Psoas muscle (tissue), 8 donors: ENCODE measurements at regions of chr3 and their contacts with region 1.

Region 1: DNA sequence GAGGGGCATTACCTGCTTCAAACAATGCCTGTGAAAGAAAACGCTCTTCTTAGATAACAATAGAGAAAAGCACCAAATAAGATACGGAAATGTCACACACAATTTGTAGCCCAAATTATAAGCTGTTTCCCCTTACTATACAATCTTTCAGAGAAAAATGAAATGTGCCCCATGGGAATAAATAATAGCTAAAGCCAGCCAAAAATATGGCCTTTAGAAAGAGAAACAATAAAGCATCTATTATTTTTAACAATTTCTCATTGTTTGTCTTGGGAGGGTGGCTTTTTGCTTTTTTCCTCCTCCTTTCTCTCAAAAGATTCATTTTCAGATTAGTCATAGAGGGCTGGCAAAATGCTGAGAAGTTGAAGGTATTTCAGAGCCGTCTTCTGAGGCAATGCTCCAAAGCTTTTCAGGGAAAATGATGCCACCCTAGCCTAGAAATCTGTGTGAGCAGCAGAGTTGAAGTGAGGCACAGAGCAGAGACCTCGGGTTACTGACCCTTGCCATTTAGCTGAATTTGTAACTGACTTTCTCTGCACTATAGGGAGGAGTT is 86.2 kb upstream of the PRICKLE2 start:
- DNase-seq: no peak
- ATAC-seq: no peak
- H3K4me3 ChIP-seq: no peak overlapping the region
- H3K27ac ChIP-seq: no peak overlapping the region
- H3K4me1 ChIP-seq: no peaks in the 10 kb centered on the region
- H3K27me3 ChIP-seq: no peaks in the 10 kb centered on the region
- CTCF ChIP-seq: no peak

Region 2: GRCh38 chr3:63607716-63608115 is 703.8 kb before region 1 on chr3:
- intact Hi-C with region 1: loop called in 1 of 2 experiments (anchors 5 kb)
- DNase-seq: no peak
- ATAC-seq: no peak
- H3K4me3 ChIP-seq: no peak overlapping the region
- H3K27ac ChIP-seq: no peak overlapping the region
- H3K4me1 ChIP-seq: no peaks in the 10 kb centered on the region
- H3K27me3 ChIP-seq: no peaks in the 10 kb centered on the region
- CTCF ChIP-seq: no peak

Region 3: DNA sequence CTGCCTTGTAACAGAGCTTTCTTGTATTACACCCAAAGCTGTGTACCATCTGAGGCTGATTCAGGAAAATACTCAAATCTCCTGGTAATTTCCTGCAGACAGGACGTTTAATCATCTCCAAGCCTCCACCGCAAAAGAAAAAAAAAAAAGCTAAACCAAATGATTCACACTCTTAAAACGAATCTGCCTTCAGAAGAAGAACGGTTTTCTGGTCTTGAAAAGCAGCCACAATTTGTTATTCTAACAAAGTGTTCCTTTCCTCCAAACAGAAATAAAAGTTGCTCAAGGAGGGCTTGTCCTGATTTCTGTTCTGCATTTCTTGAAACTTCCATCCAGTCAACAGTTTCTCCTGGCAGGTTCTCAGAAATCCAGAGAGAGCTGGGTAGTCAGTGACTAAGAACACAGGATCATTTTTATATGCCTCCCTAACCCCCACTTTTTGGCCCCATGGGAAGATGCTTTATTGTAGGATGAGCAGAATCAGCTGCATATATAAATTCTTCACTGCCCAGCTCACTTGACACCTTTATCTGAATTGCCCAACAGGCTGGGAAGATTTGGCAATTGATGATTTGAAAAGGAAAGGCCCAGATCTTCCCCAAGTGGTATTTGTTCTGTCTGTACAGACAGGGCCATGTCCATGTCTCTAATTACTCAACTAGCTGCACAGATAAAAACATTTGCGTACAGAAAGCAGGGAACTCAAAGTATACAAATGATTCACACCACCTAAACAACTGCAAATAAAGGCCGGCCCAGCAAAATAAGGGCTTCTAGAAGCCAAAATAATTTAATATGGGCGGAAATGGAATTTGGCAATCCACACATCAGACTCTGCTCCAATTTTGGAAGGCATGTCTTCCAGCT is 45.2 kb before region 1 on chr3:
- intact Hi-C with region 1: no loop called
- DNase-seq: no peak
- ATAC-seq: peak in 3 of 4 donors; percentile 37 to 63 (median 54)
- H3K4me3 ChIP-seq: peak overlapping the region; percentile 68
- H3K27ac ChIP-seq: peak overlapping the region; percentile 59
- H3K4me1 ChIP-seq: no peaks in the 10 kb centered on the region
- H3K27me3 ChIP-seq: peaks cover 0 to 16% (median 2%) of the 10 kb centered on the region in 3 donors
- CTCF ChIP-seq: no peak

Region 4: GRCh38 chr3:64278625-64279024 is 32.9 kb before region 1 on chr3:
- intact Hi-C with region 1: no loop called
- DNase-seq: no peak
- ATAC-seq: no peak
- H3K4me3 ChIP-seq: no peak overlapping the region
- H3K27ac ChIP-seq: no peak overlapping the region
- H3K4me1 ChIP-seq: no peaks in the 10 kb centered on the region
- H3K27me3 ChIP-seq: no peaks in the 10 kb centered on the region
- CTCF ChIP-seq: no peak

Region 5: GRCh38 chr3:64321747-64322146 is 10.2 kb after region 1 on chr3:
- intact Hi-C with region 1: loop called in 1 of 2 experiments (anchors 1 kb)
- DNase-seq: no peak
- ATAC-seq: no peak
- H3K4me3 ChIP-seq: no peak overlapping the region
- H3K27ac ChIP-seq: no peak overlapping the region
- H3K4me1 ChIP-seq: no peaks in the 10 kb centered on the region
- H3K27me3 ChIP-seq: no peaks in the 10 kb centered on the region
- CTCF ChIP-seq: no peak